ENCODE measurements at regions of chr7 and their contacts with region 1.

Region 1: GRCh38 chr7:36366718-36367560 is 22.7 kb upstream of the ANLN start:
- DNase-seq: no peak
- H3K4me3 ChIP-seq: peak overlapping the region; percentile 72
- H3K27me3 ChIP-seq: 0 out of 2 replicates have a peak, but pooled peaks cover 1% of the 10 kb centered on the region
- CTCF ChIP-seq: peak; percentile 65

Region 2: GRCh38 chr7:36346260-36346831 is 20.6 kb before region 1 on chr7:
- CTCF ChIA-PET with region 1: no interaction called
- POLR2A ChIA-PET with region 1: no interaction called
- DNase-seq: no peak
- H3K4me3 ChIP-seq: no peak overlapping the region
- H3K27me3 ChIP-seq: no peaks in the 10 kb centered on the region
- CTCF ChIP-seq: no peak

Region 3: GRCh38 chr7:36379831-36380504 is 13.0 kb after region 1 on chr7:
- CTCF ChIA-PET with region 1: interaction called, 11 read pairs
- POLR2A ChIA-PET with region 1: no interaction called
- DNase-seq: no peak
- H3K4me3 ChIP-seq: no peak overlapping the region
- H3K27me3 ChIP-seq: no peaks in the 10 kb centered on the region; the same call in 1 of the 2 replicates
- CTCF ChIP-seq: no peak

Region 4: GRCh38 chr7:36389371-36390198 is 22.6 kb after region 1 on chr7 and contains the start of gene ANLN:
- CTCF ChIA-PET with region 1: interaction called, 18 read pairs
- POLR2A ChIA-PET with region 1: no interaction called
- DNase-seq: peak; percentile 56
- H3K4me3 ChIP-seq: peak within 1 kb of the TSS; percentile 90
- H3K27me3 ChIP-seq: no peaks in the 10 kb centered on the region
- CTCF ChIP-seq: no peak
- polyA plus RNA-seq, gene ANLN: 54.2 and 63.3 TPM in 2 replicates